ENCODE measurements at regions of chr16 and their contacts with region 1.

Region 1: GRCh38 chr16:30032083-30032819 is 1.2 kb upstream of the TLCD3B start:
- DNase-seq: peak; percentile 77
- ATAC-seq: peak; percentile 56
- H3K4me3 ChIP-seq: no peak overlapping the region
- H3K4me3 Mint-ChIP-seq: peak overlapping the region; percentile 49
- H3K27ac ChIP-seq: no peak overlapping the region
- H3K27ac Mint-ChIP-seq: no peak overlapping the region
- H3K4me1 ChIP-seq: peaks cover 10 to 21% of the 10 kb centered on the region in 2 donors
- H3K4me1 Mint-ChIP-seq: peaks cover 10% of the 10 kb centered on the region
- H3K27me3 ChIP-seq: peaks cover 0 to 61% (median 27%) of the 10 kb centered on the region in 4 experiments
- H3K27me3 Mint-ChIP-seq: peaks cover 52% of the 10 kb centered on the region
- CTCF ChIP-seq: peak; percentile 76

Region 2: DNA sequence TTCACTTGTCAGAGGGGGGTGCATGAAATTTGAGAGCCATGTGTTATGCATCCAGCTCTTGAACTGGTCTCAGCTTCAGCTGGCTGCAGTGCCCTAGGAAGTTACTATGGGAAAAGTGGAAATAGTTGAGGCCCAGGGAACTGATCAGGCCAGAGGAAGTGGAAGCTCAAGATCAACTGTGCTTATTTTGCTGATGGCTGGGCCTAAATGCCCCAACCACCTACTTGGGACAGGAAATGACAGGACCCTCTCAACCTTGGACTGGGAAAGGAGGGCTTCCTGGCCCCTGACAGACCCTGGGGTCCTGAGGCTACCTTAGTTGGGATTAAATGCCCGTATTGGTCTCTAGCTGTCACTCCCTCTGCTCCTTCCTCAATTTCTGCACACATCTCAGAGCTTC is 59.8 kb before region 1 on chr16:
- CTCF ChIA-PET with region 1: no interaction called
- POLR2A ChIA-PET with region 1: no interaction called
- intact Hi-C with region 1: no loop called
- DNase-seq: peak; percentile 22
- ATAC-seq: no peak
- H3K4me3 ChIP-seq: no peak overlapping the region
- H3K4me3 Mint-ChIP-seq: peak overlapping the region; percentile 48
- H3K27ac ChIP-seq: peak overlapping the region in 1 of 2 donors; percentile 54
- H3K27ac Mint-ChIP-seq: no peak overlapping the region
- H3K4me1 ChIP-seq: peaks cover 31 to 38% of the 10 kb centered on the region in 2 donors
- H3K4me1 Mint-ChIP-seq: peaks cover 36% of the 10 kb centered on the region
- H3K27me3 ChIP-seq: no peaks in the 10 kb centered on the region
- H3K27me3 Mint-ChIP-seq: no peaks in the 10 kb centered on the region
- CTCF ChIP-seq: no peak

Region 3: DNA sequence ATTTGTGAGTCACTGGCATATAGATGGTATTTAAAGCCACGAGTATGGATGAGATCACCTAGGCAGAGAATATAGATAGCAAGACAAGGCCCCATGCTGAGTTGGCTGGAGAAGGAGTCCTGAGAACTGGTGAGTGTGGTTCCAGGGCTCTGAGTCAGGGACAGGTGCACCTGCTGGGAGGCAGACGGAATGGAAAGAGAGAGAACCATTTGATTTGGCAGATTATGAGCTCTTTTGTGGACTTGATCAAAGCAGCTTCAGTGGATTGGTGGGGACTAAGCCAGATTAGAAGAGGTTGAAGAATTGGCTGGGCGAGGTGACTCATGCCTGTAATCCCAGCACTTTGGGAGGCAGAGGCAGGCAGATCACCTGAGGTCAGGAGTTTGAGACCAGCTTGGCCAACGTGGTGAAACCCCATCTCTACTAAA is 13.5 kb before region 1 on chr16:
- CTCF ChIA-PET with region 1: interaction called, 18 read pairs
- POLR2A ChIA-PET with region 1: no interaction called
- intact Hi-C with region 1: no loop called
- DNase-seq: no peak
- ATAC-seq: no peak
- H3K4me3 ChIP-seq: no peak overlapping the region
- H3K4me3 Mint-ChIP-seq: no peak overlapping the region
- H3K27ac ChIP-seq: no peak overlapping the region
- H3K27ac Mint-ChIP-seq: no peak overlapping the region
- H3K4me1 ChIP-seq: peaks cover 6 to 11% of the 10 kb centered on the region in 2 donors
- H3K4me1 Mint-ChIP-seq: peaks cover 15% of the 10 kb centered on the region
- H3K27me3 ChIP-seq: no peaks in the 10 kb centered on the region
- H3K27me3 Mint-ChIP-seq: peaks cover 4% of the 10 kb centered on the region
- CTCF ChIP-seq: no peak

Region 4: GRCh38 chr16:30051518-30051917 is 19.3 kb after region 1 on chr16:
- CTCF ChIA-PET with region 1: no interaction called
- POLR2A ChIA-PET with region 1: no interaction called
- intact Hi-C with region 1: no loop called
- DNase-seq: no peak
- ATAC-seq: no peak
- H3K4me3 ChIP-seq: no peak overlapping the region
- H3K4me3 Mint-ChIP-seq: peak overlapping the region; percentile 71
- H3K27ac ChIP-seq: no peak overlapping the region
- H3K27ac Mint-ChIP-seq: peak overlapping the region; percentile 56
- H3K4me1 ChIP-seq: peaks cover 5 to 12% of the 10 kb centered on the region in 2 donors
- H3K4me1 Mint-ChIP-seq: peaks cover 13% of the 10 kb centered on the region
- H3K27me3 ChIP-seq: peaks cover 0 to 3% (median 0%) of the 10 kb centered on the region in 4 experiments
- H3K27me3 Mint-ChIP-seq: no peaks in the 10 kb centered on the region
- CTCF ChIP-seq: no peak

Region 5: GRCh38 chr16:30131869-30132475 is 99.7 kb after region 1 on chr16:
- CTCF ChIA-PET with region 1: no interaction called
- POLR2A ChIA-PET with region 1: no interaction called
- intact Hi-C with region 1: no loop called
- DNase-seq: no peak
- ATAC-seq: no peak
- H3K4me3 ChIP-seq: no peak overlapping the region
- H3K4me3 Mint-ChIP-seq: no peak overlapping the region
- H3K27ac ChIP-seq: no peak overlapping the region
- H3K27ac Mint-ChIP-seq: no peak overlapping the region
- H3K4me1 ChIP-seq: no peaks in the 10 kb centered on the region
- H3K4me1 Mint-ChIP-seq: no peaks in the 10 kb centered on the region
- H3K27me3 ChIP-seq: no peaks in the 10 kb centered on the region
- H3K27me3 Mint-ChIP-seq: no peaks in the 10 kb centered on the region
- CTCF ChIP-seq: no peak

Measured in B cell (primary cell).